ACHN (cell line): ENCODE measurements at regions of chr12 and their contacts with region 1.

Region 1: DNA sequence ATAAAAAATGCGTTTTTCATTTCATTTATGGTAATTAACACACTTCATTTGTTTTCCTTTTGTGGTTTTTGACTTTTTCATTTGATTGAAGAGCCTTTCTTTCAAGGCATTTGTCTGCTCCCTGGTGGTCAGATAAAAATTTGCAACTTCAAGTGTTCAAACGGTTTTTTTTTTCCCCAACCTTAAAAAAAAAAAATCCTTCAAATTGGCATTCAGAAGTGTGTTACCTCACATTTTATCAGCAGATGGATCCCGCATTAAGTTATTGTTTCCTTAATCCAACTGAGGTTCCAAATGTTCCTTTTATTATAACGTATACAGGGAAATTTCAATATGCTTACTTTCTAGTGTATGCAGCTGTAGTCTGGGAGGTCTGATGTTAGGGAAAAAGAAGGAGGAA is 47.2 kb downstream of the MYF5 start:
- DNase-seq: peak; percentile 69

Region 2: DNA sequence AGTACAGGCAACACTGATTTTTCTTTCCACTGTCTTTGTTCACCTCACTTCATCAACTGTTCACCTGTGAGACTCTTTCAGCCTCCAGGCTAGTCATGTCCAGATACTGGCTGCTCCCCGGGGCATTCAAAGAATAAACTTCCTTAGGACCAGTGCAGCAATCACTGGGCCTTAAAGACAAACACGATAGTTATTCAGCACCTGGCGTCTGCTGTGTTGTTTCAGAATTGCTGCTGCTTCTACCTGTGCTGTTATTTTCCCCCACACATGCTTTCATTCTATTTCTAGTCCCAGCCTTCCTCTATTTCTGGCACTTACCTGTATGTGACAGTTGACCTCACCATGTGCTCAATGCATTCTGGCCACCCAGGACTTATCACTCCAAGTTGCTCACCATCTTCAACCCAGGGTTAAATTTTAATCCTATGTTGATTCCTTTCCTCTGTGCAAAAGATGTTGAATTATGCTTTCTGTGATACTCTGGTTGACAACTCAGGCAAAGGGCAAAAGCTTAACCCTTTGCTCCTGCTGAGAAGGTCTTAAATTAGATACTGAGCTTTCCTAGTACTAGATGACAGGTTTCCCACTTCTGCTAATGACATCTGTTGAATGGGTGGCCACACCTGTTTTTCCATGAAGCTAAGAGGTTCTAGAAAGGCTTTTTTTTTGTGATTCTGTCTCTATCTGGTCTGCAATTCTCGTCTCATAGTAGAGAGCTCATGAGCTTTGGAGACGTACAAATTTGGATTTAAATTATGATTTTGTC is 278.5 kb before region 1 on chr12:
- in situ Hi-C with region 1: loop called (anchors 25 kb)
- DNase-seq: no peak

Region 3: GRCh38 chr12:80556566-80556965 is 207.3 kb before region 1 on chr12:
- in situ Hi-C with region 1: no loop called
- DNase-seq: no peak